ENCODE measurements at regions of chr7 and their contacts with region 1.

Region 1: GRCh38 chr7:155017834-155018233 is 14.9 kb upstream of the PAXIP1 start:
- DNase-seq: no peak
- H3K4me3 ChIP-seq: no peak overlapping the region
- H3K27ac ChIP-seq: no peak overlapping the region
- H3K4me1 ChIP-seq: no peaks in the 10 kb centered on the region
- H3K27me3 ChIP-seq: no peaks in the 10 kb centered on the region
- CTCF ChIP-seq: no peak

Region 2: GRCh38 chr7:154978017-154978416 is 39.8 kb before region 1 on chr7:
- CTCF ChIA-PET with region 1: no interaction called
- dilution Hi-C with region 1: loop called (anchors 5 kb)
- in situ Hi-C with region 1: no loop called
- intact Hi-C with region 1: no loop called
- DNase-seq: no peak
- H3K4me3 ChIP-seq: no peak overlapping the region
- H3K27ac ChIP-seq: no peak overlapping the region
- H3K4me1 ChIP-seq: no peaks in the 10 kb centered on the region
- H3K27me3 ChIP-seq: no peaks in the 10 kb centered on the region
- CTCF ChIP-seq: no peak

Region 3: GRCh38 chr7:155333346-155334234 is 315.8 kb after region 1 on chr7:
- CTCF ChIA-PET with region 1: no interaction called
- dilution Hi-C with region 1: loop called (anchors 5 kb)
- in situ Hi-C with region 1: no loop called
- intact Hi-C with region 1: no loop called
- DNase-seq: no peak
- H3K4me3 ChIP-seq: no peak overlapping the region
- H3K27ac ChIP-seq: no peak overlapping the region
- H3K4me1 ChIP-seq: no peaks in the 10 kb centered on the region
- H3K27me3 ChIP-seq: no peaks in the 10 kb centered on the region
- CTCF ChIP-seq: no peak

Measured in mammary epithelial cell (primary cell).